ENCODE measurements at regions of chr11 and their contacts with region 1.

Region 1: GRCh38 chr11:111299101-111300026 is 1.0 kb downstream of the POU2AF3 start:
- DNase-seq: no peak
- H3K4me3 Mint-ChIP-seq: no peak overlapping the region
- H3K27ac Mint-ChIP-seq: no peak overlapping the region
- H3K4me1 Mint-ChIP-seq: peaks cover 4% of the 10 kb centered on the region
- H3K27me3 Mint-ChIP-seq: peaks cover 12% of the 10 kb centered on the region
- CTCF ChIP-seq: peak; percentile 8

Region 2: DNA sequence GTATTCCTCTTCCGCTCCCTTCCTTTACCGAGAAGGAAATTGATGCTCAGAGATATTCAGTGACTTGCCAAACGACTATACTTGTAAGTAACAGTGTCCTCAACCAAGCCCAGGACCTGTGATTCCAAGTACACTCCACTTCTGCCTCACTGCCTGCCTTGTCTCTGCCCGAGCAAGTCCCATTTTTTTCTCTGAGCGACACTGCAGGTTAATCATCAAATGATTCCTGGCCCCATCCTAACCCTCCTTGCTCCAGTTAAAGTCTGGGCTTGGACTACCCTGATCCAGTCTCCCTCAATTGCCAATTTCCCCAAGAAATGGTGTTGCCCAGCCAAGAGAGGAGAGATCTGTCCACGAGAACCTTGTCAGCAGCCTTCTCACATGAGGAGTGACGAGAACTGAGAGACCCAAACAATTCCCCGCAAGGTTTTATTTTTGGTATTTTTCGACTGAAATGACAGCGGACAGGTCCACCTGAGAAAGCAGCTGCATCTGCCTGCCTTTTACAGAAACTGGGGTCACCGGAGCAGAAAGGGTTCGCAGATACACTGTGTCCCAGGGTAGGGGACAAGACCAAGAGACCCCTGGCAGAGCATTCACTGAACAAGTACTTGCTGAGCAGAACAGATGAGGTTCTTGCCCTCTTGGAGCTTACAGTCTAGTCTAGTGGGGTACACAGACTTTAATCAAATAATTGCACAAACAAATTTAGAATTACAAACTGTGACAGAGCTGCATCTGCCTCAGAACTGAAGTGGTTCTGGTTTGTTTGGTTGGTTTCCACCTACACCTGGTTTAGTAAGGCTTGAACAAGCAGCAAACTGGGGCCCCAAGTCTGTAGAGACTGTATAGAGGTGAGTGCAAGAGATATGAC is 68.3 kb after region 1 on chr11:
- CTCF ChIA-PET with region 1: no interaction called
- POLR2A ChIA-PET with region 1: no interaction called
- intact Hi-C with region 1: no loop called
- DNase-seq: no peak
- H3K4me3 Mint-ChIP-seq: no peak overlapping the region
- H3K27ac Mint-ChIP-seq: peak overlapping the region; percentile 85
- H3K4me1 Mint-ChIP-seq: peaks cover 7% of the 10 kb centered on the region
- H3K27me3 Mint-ChIP-seq: no peaks in the 10 kb centered on the region
- CTCF ChIP-seq: no peak

Region 3: GRCh38 chr11:111429066-111429506 is 129.7 kb after region 1 on chr11:
- CTCF ChIA-PET with region 1: interaction called, 9 read pairs
- POLR2A ChIA-PET with region 1: interaction called, 14 read pairs
- intact Hi-C with region 1: loop called (anchors 5 kb)
- DNase-seq: peak; percentile 82
- H3K4me3 Mint-ChIP-seq: no peak overlapping the region
- H3K27ac Mint-ChIP-seq: no peak overlapping the region
- H3K4me1 Mint-ChIP-seq: peaks cover 22% of the 10 kb centered on the region
- H3K27me3 Mint-ChIP-seq: no peaks in the 10 kb centered on the region
- CTCF ChIP-seq: peak; percentile 74